Prostate gland (tissue), 2 donors: ENCODE measurements at regions of chr15 and their contacts with region 1.

Region 1: DNA sequence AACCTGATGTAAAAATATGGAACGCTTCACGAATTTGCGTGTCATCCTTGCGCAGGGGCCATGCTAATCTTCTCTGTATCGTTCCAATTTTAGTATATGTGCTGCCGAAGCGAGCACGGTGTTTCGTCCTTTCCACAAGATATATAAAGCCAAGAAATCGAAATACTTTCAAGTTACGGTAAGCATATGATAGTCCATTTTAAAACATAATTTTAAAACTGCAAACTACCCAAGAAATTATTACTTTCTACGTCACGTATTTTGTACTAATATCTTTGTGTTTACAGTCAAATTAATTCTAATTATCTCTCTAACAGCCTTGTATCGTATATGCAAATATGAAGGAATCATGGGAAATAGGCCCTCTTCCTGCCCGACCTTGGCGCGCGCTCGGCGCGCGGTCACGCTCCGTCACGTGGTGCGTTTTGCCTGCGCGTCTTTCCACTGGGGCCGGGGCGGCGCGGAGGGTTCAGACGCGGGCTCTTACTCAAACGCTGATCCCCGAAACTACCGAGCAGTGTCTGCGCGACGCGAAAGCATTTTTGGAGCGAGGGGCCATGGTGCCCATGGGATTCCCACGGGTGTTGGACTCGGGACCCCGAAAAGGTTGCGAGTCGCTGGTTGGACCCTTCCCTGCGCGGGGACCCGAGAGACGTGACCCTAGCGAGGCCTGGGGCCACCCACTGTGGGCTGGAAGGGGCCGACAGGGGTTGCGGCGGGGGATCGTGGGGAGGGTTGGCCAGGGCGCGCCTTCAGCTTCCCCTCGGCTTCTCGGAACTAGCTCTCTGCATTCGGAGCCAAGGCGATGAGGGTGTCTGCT is at the start of gene RNU6-1:
- DNase-seq: peak; percentile 92
- H3K4me3 ChIP-seq: peak within 1 kb of the TSS; percentile 79 to 80
- H3K27ac ChIP-seq: peak within 1 kb of the TSS; percentile 96 to 97
- H3K4me1 ChIP-seq: peaks cover 1% of the 10 kb centered on the region
- H3K27me3 ChIP-seq: no peaks in the 10 kb centered on the region
- CTCF ChIP-seq: peak in 1 of 4 experiments; percentile 9
- POLR2A ChIP-seq: peak; percentile 84
- total RNA-seq, gene RNU6-1: not detected

Region 2: DNA sequence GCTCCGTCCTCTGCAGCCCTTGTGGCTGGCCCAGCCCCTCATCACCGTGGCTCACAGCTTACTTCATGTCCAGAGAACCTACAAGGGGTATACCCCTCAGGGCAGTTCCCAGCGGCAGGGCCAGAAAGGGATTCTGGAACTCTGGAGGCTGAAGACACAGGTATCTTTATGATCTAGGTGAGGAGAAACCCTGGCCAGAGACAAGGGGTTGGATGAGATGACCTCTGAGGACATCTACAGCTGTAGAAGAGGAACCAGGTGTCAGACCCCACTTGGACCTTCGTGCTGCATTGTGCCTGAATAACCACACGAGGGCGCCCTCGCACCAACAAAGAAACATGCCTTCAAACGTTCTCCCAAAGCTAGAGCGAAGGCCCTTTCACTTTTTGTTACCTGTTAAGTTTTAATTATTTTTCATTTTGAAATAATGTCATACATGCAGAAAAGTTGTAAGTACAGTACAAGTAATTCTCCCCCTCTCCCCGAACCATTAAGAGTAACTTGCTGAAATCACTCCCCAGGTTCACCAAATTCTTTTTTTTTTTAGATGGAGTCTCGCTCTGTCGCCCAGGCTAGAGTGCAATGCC is 893.5 kb before region 1 on chr15:
- intact Hi-C with region 1: loop called (anchors 5 kb)
- DNase-seq: peak; percentile 60
- H3K4me3 ChIP-seq: no peak overlapping the region
- H3K27ac ChIP-seq: no peak overlapping the region
- H3K4me1 ChIP-seq: no peaks in the 10 kb centered on the region
- H3K27me3 ChIP-seq: no peaks in the 10 kb centered on the region
- CTCF ChIP-seq: peak; percentile 86 to 95 (median 92)
- POLR2A ChIP-seq: no peak

Region 3: GRCh38 chr15:67501177-67501835 is 338.8 kb before region 1 on chr15:
- intact Hi-C with region 1: loop called (anchors 2 kb)
- DNase-seq: no peak
- H3K4me3 ChIP-seq: no peak overlapping the region
- H3K27ac ChIP-seq: no peak overlapping the region
- H3K4me1 ChIP-seq: no peaks in the 10 kb centered on the region
- H3K27me3 ChIP-seq: no peaks in the 10 kb centered on the region
- CTCF ChIP-seq: peak in 3 of 4 experiments; percentile 14 to 48 (median 35)
- POLR2A ChIP-seq: no peak

Region 4: DNA sequence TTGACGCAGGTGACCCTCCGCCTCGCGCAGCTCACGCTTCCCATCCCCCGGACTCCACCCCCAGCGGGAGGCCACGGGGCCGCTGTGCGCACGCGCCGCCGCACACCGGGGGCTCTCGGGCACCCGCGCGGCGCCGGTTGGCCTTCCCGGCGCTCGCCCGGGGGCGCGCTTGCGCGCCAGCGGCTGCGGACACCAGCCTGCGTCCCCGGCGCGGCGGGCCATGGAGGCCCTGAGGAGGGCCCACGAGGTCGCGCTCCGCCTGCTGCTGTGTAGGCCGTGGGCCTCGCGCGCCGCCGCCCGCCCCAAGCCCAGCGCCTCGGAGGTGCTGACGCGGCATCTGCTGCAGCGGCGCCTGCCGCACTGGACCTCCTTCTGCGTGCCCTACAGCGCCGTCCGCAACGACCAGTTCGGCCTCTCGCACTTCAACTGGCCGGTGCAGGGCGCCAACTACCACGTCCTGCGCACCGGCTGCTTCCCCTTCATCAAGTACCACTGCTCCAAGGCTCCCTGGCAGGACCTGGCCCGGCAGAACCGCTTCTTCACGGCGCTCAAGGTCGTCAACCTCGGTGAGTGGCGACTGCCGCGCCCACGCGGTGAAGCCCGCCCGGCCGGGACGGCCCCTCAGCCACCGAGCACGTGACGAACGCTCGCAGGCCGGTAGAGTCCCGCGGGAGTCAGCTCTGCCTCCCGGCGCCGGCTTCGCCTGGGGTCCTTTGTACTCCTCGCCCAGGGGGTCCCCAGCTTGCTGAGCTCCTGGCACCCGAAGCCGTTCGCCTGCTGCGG is 318.9 kb before region 1 on chr15 and contains the start of gene C15orf61:
- intact Hi-C with region 1: loop called (anchors 5 kb)
- DNase-seq: peak; percentile 87
- H3K4me3 ChIP-seq: peak within 1 kb of the TSS; percentile 64 to 85
- H3K27ac ChIP-seq: peak within 1 kb of the TSS; percentile 95
- H3K4me1 ChIP-seq: peaks cover 4% of the 10 kb centered on the region
- H3K27me3 ChIP-seq: no peaks in the 10 kb centered on the region
- CTCF ChIP-seq: peak in 1 of 4 experiments; percentile 30
- POLR2A ChIP-seq: no peak
- total RNA-seq, gene C15orf61: 13.6 to 15.0 TPM

Region 5: GRCh38 chr15:67542420-67543347 is 297.5 kb before region 1 on chr15 and contains the start of gene MAP2K5:
- intact Hi-C with region 1: loop called (anchors 10 kb)
- DNase-seq: peak; percentile 81
- H3K4me3 ChIP-seq: peak within 1 kb of the TSS; percentile 78 to 80
- H3K27ac ChIP-seq: peak within 1 kb of the TSS; percentile 75 to 81
- H3K4me1 ChIP-seq: peaks cover 4% of the 10 kb centered on the region
- H3K27me3 ChIP-seq: no peaks in the 10 kb centered on the region
- CTCF ChIP-seq: peak in 1 of 4 experiments; percentile 22
- POLR2A ChIP-seq: peak; percentile 51
- total RNA-seq, gene MAP2K5: 10.7 to 15.7 TPM

Region 6: GRCh38 chr15:67880651-67881182 is 40.6 kb after region 1 on chr15:
- intact Hi-C with region 1: no loop called
- DNase-seq: peak; percentile 43
- H3K4me3 ChIP-seq: no peak overlapping the region
- H3K27ac ChIP-seq: no peak overlapping the region
- H3K4me1 ChIP-seq: peaks cover 3% of the 10 kb centered on the region
- H3K27me3 ChIP-seq: no peaks in the 10 kb centered on the region
- CTCF ChIP-seq: no peak
- POLR2A ChIP-seq: no peak

Region 7: DNA sequence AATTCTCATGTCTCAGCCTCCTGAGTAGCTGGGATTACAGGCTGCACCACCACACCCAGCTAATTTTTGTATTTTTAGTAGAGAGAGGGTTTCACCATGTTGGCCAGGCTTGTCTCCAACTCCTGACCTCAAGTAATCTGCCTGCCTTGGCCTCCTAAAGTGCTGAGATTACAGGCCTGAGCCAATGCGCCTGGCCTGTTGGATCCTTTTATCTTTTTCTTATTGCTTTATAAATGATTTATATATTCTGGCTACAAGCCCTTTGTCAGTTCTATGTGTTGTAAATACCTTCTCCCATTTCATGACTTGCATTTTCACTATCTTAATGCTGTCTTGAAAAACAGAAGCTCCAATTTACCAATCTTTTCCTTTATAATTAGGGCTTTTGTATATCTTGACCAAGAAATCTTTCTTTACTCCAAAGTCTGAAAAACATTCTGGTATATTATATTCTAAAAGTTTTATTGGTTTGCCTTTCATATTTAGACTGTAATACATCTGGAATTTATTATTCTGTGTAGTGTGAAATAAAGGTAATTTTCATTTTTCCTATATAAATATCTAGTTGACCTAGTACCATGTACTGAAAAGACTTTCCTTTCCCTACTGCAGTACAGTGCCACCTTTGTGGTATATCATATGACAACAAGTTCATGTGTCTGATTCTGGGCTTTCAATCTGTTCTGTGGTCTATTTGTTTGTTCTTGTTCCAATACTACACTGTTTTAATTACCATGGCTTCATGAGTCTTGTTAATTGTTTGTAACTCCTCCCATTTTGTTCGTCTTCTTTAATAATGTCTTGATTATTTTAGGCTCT is 52.6 kb after region 1 on chr15:
- intact Hi-C with region 1: no loop called
- DNase-seq: no peak
- H3K4me3 ChIP-seq: no peak overlapping the region
- H3K27ac ChIP-seq: peak overlapping the region; percentile 46 to 47
- H3K4me1 ChIP-seq: no peaks in the 10 kb centered on the region
- H3K27me3 ChIP-seq: no peaks in the 10 kb centered on the region
- CTCF ChIP-seq: no peak
- POLR2A ChIP-seq: no peak

Region 8: DNA sequence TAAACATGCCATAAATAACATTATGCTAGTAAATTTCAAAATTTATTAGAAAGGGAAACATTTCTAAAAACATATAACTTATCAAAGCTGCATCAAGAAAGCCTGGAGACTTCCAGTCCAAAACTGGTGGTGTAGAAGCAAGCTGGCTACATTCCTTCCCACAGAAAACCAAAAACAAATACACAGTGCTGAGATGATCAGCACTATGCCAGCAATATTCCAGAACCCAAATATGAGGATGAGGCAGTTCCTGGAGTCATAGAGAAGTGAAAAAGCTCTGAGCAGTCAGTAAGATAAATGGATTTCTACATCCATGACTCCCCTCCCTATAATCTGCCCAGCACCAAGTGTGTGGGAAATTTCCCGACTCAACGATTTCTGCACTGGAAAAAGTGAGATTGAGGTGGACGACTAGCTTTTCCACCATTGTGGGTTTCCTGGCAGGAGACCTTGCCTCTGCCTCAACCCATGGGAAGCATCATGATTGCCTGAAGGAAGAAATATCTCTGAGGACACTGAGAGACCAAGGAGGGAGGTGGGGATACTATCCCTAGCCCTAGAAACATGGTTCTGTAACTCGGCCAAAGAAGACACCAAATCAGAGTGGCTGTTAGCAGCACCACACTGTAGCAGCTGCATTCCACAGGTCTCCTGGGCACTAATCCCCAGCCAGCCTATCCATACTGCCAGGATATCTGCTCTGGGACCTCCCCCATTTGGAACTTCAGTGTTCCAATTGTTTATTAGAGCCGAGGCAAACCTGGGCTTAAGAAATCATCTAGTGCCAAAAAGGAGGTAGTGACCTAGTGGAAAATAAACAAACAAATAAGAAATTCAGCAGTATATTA is 401.2 kb after region 1 on chr15:
- intact Hi-C with region 1: no loop called
- DNase-seq: no peak
- H3K4me3 ChIP-seq: no peak overlapping the region
- H3K27ac ChIP-seq: no peak overlapping the region
- H3K4me1 ChIP-seq: no peaks in the 10 kb centered on the region
- H3K27me3 ChIP-seq: no peaks in the 10 kb centered on the region
- CTCF ChIP-seq: no peak
- POLR2A ChIP-seq: no peak